Activated naive CD4-positive, alpha-beta T cell treated with anti-CD3 and anti-CD28 coated beads, Interleukin-2, amount 10 ng/mL, durations not matched to agents 7 days and 5 days (primary cell): ENCODE measurements at regions of chr11 and their contacts with region 1.

Region 1: GRCh38 chr11:61899146-61899841 is 7.9 kb upstream of the FADS3 start:
- DNase-seq: peak; percentile 94
- H3K4me3 Mint-ChIP-seq: no peak overlapping the region
- H3K27ac Mint-ChIP-seq: peak overlapping the region; percentile 19
- H3K4me1 Mint-ChIP-seq: peaks cover 6% of the 10 kb centered on the region
- H3K27me3 Mint-ChIP-seq: peaks cover 16% of the 10 kb centered on the region

Region 2: GRCh38 chr11:61871158-61871597 is 28.1 kb before region 1 on chr11:
- CTCF ChIA-PET with region 1: interaction called, 10 read pairs
- DNase-seq: peak; percentile 78
- H3K4me3 Mint-ChIP-seq: peak overlapping the region; percentile 55
- H3K27ac Mint-ChIP-seq: no peak overlapping the region
- H3K4me1 Mint-ChIP-seq: peaks cover 3% of the 10 kb centered on the region
- H3K27me3 Mint-ChIP-seq: peaks cover 39% of the 10 kb centered on the region

Region 3: DNA sequence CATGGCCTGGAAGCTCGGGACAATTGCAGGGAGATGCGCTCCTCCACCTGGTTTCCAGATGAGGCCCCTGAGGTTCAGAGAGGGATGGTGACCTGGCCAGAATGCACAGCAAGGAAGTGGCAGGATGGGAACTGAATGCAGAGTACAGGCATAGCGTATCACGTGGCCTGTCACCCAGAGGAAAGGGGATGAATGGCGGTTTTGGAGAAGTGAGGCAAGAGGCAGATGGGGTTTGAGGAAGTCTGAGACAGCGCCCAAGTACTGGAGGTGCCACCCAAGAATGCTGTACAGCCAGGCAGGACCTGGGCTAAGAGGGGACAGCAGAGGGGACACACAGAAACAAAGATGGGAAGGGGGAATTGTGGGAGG is 13.2 kb after region 1 on chr11:
- CTCF ChIA-PET with region 1: interaction called, 10 read pairs
- DNase-seq: no peak
- H3K4me3 Mint-ChIP-seq: no peak overlapping the region
- H3K27ac Mint-ChIP-seq: no peak overlapping the region
- H3K4me1 Mint-ChIP-seq: no peaks in the 10 kb centered on the region
- H3K27me3 Mint-ChIP-seq: peaks cover 37% of the 10 kb centered on the region